ENCODE measurements at regions of chr10 and their contacts with region 1.

Region 1: DNA sequence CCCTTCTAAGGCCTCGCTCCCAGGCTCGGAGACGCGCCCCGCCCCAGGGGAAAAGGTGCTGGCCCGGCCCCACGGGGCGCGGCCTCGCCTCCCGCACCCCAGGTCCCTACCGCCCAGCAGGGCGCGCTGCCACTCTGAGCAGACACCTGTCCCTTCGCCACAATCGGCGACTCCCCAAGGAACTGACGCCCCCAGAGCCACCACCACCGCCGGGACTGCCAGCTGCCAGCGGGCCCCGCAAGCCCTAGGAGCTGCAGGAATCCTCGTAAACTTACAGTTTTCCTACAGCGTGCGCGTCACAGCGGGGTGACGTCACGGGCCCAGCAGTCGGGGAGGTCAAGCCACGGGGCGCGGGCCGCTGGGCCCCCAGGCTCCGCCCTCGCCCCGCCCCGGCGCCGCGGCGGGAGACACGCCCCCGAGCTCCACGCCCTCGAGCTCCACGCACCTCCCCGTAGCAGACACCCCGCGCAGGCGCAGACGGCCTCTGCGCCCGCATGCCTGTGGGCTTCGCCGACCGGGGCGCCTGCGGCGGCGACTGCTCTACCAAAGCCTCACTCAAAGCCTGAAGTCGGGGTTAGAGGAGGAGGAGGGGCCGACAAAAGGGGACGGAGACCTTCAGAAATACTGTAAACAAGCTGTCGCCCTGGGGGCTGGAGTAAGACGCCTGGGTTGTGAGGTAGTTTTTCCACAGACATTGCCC is at the start of gene ZNF438:
- DNase-seq: peak; percentile 98
- H3K4me3 ChIP-seq: peak within 1 kb of the TSS; percentile 57 to 77 (median 66)
- H3K27ac ChIP-seq: peak within 1 kb of the TSS; percentile 96 to 100 (median 99)
- H3K4me1 ChIP-seq: peaks cover 2 to 35% (median 21%) of the 10 kb centered on the region in 4 donors
- H3K27me3 ChIP-seq: no peaks in the 10 kb centered on the region
- CTCF ChIP-seq: peak; percentile 38 to 49 (median 48)
- EP300 ChIP-seq: peak; percentile 13 to 69 (median 18)
- POLR2A ChIP-seq: peak; percentile 71 to 86
- total RNA-seq, gene ZNF438: 11.9 to 18.9 (median 15.6) TPM

Region 2: GRCh38 chr10:30783939-30784500 is 247.7 kb before region 1 on chr10:
- intact Hi-C with region 1: loop called (anchors 1 kb)
- DNase-seq: peak; percentile 94
- H3K4me3 ChIP-seq: peak overlapping the region; percentile 47 to 74 (median 61)
- H3K27ac ChIP-seq: peak overlapping the region; percentile 92 to 99 (median 93)
- H3K4me1 ChIP-seq: peaks cover 0 to 47% (median 38%) of the 10 kb centered on the region in 4 donors
- H3K27me3 ChIP-seq: no peaks in the 10 kb centered on the region
- CTCF ChIP-seq: peak; percentile 91 to 94 (median 93)
- EP300 ChIP-seq: no peak
- POLR2A ChIP-seq: no peak

Region 3: DNA sequence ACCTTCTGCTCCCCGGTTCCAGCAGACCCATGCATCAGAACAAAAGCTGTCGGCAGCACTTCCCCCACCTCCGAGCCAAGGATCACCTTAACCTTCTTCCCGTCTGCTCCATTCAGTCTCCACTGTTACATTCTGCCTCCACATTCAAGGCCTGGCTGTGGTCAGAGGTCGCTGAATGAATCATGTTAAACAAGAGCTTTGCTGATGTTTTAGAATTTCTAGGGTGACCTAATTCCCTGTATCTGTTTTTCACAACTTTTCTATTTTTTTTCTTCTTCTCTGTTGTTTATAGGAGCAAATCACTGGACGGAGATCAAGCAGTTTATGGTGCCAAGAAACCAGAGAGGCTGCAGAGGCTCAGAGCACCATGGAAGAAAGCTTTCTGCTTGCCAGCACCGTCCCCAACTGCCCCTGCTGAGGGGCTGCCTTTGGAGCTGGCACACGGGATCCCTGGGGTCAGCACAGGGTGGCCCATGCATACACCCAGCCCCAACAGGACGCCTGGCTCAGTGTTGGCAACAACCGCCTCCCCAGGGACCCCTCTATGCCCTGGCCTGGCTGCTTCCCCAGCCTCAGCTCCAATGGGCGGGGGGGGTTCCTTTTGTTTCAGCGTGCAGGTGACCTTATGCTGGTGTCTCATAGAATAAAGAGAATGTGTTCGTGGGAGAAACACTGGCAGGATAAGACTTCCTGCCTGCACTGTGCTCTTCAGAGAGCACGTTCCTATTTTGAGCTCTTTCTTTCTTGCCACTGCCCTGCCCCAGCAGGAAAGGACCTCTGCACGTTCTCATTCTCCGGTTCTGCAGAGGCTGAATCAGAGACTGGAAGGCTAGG is 219.5 kb before region 1 on chr10:
- intact Hi-C with region 1: loop called (anchors 2 kb)
- DNase-seq: peak; percentile 89
- H3K4me3 ChIP-seq: peak overlapping the region in 3 of 4 donors; percentile 0 to 29 (median 23)
- H3K27ac ChIP-seq: peak overlapping the region; percentile 70 to 94 (median 80)
- H3K4me1 ChIP-seq: peaks cover 0 to 84% (median 73%) of the 10 kb centered on the region in 4 donors
- H3K27me3 ChIP-seq: no peaks in the 10 kb centered on the region
- CTCF ChIP-seq: no peak
- EP300 ChIP-seq: peak in 2 of 4 donors; percentile 39 to 48
- POLR2A ChIP-seq: no peak

Region 4: DNA sequence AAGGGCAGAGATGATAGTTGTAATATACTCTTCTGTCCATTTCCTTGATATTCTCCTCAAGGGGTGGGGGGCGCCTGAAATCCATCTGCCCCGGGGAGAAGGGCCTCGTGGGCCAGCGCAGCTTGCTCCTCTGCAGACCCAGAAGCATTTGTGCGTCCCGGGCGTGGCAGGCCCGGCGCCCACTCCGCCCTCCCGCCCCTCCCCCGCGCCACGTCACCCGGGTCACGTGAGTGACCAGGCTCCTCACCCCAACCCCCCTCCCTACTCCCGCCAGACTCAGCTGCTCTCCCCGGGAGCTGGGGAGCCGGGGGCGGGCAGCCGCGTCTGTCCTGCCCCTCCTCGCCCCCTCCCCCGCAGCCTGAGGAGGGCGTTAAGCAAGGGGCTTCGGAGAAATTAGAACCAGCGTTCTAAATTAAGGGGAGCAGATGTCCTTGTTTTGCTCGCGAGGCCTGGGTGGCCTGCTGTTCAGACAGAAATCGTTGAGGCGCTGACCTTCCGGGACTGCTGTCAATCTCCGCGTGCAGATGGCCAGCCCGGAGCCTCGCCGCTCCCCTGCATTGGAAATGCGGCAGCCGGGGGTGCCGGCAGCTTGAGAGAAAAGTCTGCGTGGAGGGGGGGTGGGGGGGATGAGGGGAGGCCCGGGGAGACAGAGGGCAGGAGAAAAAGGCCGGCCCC is 102.1 kb after region 1 on chr10:
- intact Hi-C with region 1: loop called (anchors 5 kb)
- DNase-seq: peak; percentile 92
- H3K4me3 ChIP-seq: peak overlapping the region; percentile 49 to 56 (median 51)
- H3K27ac ChIP-seq: peak overlapping the region; percentile 85 to 90 (median 87)
- H3K4me1 ChIP-seq: peaks cover 0 to 47% (median 33%) of the 10 kb centered on the region in 4 donors
- H3K27me3 ChIP-seq: no peaks in the 10 kb centered on the region
- CTCF ChIP-seq: no peak
- EP300 ChIP-seq: no peak
- POLR2A ChIP-seq: peak; percentile 60 to 75

Region 5: DNA sequence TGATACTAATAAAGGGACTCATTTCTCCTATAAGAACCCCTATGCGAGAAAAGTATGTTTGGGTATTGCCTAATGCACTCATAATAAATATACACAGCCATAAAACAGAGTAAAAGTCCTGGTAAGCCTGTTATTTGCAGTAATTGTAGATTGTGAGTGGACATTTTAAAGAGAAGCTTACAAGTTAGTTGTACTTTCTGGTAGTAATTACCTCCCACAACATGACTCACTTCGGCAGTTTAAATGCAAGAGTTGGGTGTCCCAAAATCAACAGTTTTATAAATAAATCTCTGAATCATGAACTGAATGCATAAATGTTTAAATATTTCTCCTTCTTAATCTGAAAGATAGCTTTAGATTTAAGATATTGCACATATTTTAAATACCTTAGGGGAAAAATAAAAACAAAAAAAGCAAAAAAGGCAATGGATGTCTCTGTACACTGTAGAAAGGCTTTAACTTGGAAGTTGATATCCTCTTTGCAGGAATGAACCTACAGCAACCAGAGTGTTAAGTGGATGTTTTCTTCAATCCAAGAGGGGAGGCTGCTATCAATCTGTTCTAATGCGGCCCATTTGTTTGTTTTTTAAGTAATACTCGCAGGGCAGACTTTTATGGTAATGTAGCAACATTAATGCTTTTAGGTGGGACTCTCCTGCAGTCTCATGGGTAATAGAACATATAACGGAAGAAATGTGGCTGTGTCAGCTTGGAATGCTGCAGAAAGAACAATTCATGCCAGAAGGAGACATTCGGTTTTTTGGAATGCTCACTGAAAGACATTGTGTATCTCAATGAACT is 230.0 kb after region 1 on chr10:
- intact Hi-C with region 1: no loop called
- DNase-seq: no peak
- H3K4me3 ChIP-seq: peak overlapping the region in 1 of 4 donors; percentile 22
- H3K27ac ChIP-seq: peak overlapping the region in 3 of 4 donors; percentile 5 to 55 (median 48)
- H3K4me1 ChIP-seq: peaks cover 0 to 26% (median 19%) of the 10 kb centered on the region in 4 donors
- H3K27me3 ChIP-seq: no peaks in the 10 kb centered on the region
- CTCF ChIP-seq: no peak
- EP300 ChIP-seq: no peak
- POLR2A ChIP-seq: no peak

Region 6: GRCh38 chr10:31603235-31604087 is 571.8 kb after region 1 on chr10:
- intact Hi-C with region 1: loop called (anchors 5 kb)
- DNase-seq: peak; percentile 98
- H3K4me3 ChIP-seq: peak overlapping the region; percentile 40 to 74 (median 66)
- H3K27ac ChIP-seq: peak overlapping the region; percentile 86 to 93 (median 90)
- H3K4me1 ChIP-seq: peaks cover 0 to 58% (median 38%) of the 10 kb centered on the region in 4 donors
- H3K27me3 ChIP-seq: no peaks in the 10 kb centered on the region
- CTCF ChIP-seq: no peak
- EP300 ChIP-seq: peak in 1 of 4 donors; percentile 68
- POLR2A ChIP-seq: peak; percentile 36 to 74

Region 7: DNA sequence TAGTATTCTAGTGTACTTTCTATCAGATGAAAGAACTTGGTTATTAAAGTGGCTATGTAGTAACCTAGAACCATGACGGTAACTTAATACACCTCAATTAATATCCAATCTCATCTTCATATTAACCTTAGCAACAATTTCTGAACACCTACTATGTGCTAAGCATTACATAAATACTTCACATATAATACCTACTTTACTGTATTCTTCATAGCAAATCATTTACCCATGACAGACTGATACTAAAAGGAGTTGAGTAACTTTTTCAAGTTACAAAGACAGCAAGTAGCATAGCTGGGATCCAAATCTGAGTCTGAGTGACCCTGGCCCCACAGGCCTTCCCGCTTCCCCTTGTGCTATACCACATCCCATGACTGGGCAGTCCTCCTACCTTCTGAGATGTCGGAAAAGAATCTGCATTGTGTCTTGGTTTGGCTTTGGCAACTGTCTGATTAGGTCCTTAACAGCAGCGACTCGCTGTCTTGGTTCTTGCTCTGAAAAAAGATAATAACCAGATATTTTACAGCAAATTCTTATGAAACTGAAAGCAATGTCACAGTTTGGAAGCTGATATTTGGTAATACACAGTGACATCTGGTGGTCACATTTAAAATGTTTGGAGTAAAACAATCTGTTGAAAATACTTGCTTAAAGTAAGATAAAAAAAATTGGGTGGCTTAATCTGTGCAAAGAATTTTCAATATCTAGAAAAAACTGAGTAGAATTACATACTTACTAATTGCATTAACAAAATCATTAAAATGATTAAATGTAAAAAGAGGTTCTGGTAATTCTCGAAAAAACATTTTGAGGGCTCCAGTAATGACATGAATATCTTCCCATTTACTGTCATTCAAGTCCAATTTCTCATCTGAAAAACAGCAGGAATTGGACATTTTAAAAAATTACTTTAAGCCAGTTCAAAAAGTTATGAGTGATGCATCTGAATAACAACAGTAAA is 776.8 kb after region 1 on chr10:
- intact Hi-C with region 1: loop called (anchors 5 kb)
- DNase-seq: peak; percentile 72
- H3K4me3 ChIP-seq: peak overlapping the region; percentile 7 to 37 (median 33)
- H3K27ac ChIP-seq: peak overlapping the region; percentile 50 to 84 (median 79)
- H3K4me1 ChIP-seq: peaks cover 0 to 32% (median 7%) of the 10 kb centered on the region in 4 donors
- H3K27me3 ChIP-seq: no peaks in the 10 kb centered on the region
- CTCF ChIP-seq: peak; percentile 43 to 57 (median 44)
- EP300 ChIP-seq: no peak
- POLR2A ChIP-seq: no peak